Endothelial cell of umbilical vein (primary cell): ENCODE measurements at regions of chr11 and their contacts with region 1.

Region 1: DNA sequence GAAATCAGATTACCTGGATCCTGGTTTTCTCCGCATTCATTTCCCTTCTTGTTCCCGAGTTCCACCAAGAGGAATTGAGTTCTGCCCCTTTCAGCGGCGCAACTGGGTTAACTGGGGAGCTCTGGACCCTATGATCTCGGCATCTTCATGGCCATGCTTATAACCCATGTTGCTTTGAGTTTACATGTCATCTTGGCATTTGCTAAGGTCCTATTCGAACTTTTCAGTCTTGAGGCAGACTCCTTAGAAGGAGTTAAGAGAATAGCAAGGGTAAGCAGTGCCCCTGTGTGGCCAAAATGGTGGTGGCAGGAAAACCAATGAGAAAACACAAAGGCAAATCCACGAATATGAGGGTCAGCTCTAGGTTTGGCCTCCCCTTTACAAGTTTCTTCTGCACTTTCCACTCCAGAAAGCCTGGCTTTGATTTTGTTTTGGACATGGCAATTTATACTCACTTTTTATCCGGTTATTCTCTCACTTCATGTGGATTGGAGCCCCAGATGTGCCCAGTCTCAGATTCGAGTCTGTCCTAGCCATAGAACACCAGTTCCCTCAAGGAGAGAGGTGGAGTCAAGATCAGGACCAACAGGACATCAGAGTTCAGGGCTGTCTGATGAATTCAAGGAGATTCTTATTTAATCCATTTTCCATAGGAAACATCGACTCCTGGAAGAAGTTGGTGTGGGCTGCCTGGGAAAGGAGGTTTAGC is 55.3 kb upstream of the FBXO3 start:
- DNase-seq: peak; percentile 76
- H3K4me3 ChIP-seq: peak overlapping the region; percentile 0 to 29 (median 25)
- H3K27ac ChIP-seq: no peak overlapping the region
- H3K4me1 ChIP-seq: peaks cover 4% of the 10 kb centered on the region
- H3K27me3 ChIP-seq: peaks cover 17 to 19% of the 10 kb centered on the region in 2 experiments
- CTCF ChIP-seq: peak; percentile 74 to 81
- POLR2A ChIP-seq: no peak

Region 2: GRCh38 chr11:33161120-33162005 is 668.2 kb before region 1 on chr11 and contains the start of gene CSTF3:
- CTCF ChIA-PET with region 1: interaction called, 4 read pairs
- POLR2A ChIA-PET with region 1: no interaction called
- dilution Hi-C with region 1: no loop called
- intact Hi-C with region 1: loop called (anchors 2 kb)
- DNase-seq: peak; percentile 99
- H3K4me3 ChIP-seq: peak within 1 kb of the TSS; percentile 62 to 100 (median 100)
- H3K27ac ChIP-seq: peak within 1 kb of the TSS; percentile 92
- H3K4me1 ChIP-seq: peaks cover 23% of the 10 kb centered on the region
- H3K27me3 ChIP-seq: no peaks in the 10 kb centered on the region
- CTCF ChIP-seq: peak; percentile 18 to 38
- POLR2A ChIP-seq: peak; percentile 95
- total RNA-seq, gene CSTF3: 46.6 and 52.3 TPM in 2 replicates

Region 3: GRCh38 chr11:33362051-33362910 is 467.3 kb before region 1 on chr11:
- CTCF ChIA-PET with region 1: no interaction called
- POLR2A ChIA-PET with region 1: no interaction called
- dilution Hi-C with region 1: no loop called
- intact Hi-C with region 1: loop called (anchors 2 kb)
- DNase-seq: peak; percentile 65
- H3K4me3 ChIP-seq: no peak overlapping the region
- H3K27ac ChIP-seq: no peak overlapping the region
- H3K4me1 ChIP-seq: no peaks in the 10 kb centered on the region
- H3K27me3 ChIP-seq: no peaks in the 10 kb centered on the region
- CTCF ChIP-seq: peak; percentile 28 to 35
- POLR2A ChIP-seq: no peak

Region 4: DNA sequence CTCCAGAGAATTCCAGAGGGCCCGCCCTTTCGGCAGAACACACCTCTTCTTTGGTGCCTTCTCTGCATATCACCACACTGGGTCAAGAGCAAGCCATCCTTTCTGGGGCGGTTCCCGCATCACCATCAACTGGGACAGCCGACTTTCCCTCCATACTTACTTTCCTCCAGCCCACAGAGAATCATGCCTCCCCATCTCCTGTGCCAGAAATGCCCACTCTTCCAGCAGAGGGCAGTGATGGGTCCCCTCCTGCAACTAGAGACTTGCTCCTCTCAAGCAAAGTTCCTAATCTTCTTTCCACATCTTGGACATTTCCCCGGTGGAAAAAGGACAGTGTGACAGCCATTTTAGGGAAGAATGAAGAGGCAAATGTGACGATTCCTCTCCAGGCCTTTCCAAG is 286.7 kb before region 1 on chr11:
- CTCF ChIA-PET with region 1: interaction called, 3 read pairs
- POLR2A ChIA-PET with region 1: no interaction called
- dilution Hi-C with region 1: no loop called
- intact Hi-C with region 1: loop called (anchors 1 kb)
- DNase-seq: peak; percentile 72
- H3K4me3 ChIP-seq: no peak overlapping the region
- H3K27ac ChIP-seq: no peak overlapping the region
- H3K4me1 ChIP-seq: no peaks in the 10 kb centered on the region
- H3K27me3 ChIP-seq: no peaks in the 10 kb centered on the region
- CTCF ChIP-seq: peak; percentile 74 to 79
- POLR2A ChIP-seq: no peak

Region 5: DNA sequence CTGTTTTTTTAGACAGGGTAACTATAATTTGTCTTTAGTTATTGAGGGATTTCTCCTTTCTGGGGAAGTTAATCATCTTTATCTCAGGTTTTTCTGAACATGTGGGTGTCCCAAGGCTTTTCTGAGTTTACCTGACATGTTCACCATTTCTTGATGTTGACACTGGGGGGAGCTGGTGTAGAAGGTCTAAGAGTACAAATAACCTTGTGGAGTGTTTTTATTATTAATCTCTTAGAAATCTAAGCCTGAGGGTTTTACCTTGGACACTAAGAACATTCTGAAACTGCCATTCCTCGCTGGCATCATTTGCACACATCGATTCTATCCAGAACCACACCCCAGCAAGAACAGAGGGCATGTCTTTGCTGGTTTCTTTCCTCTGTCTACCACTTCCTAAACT is 113.4 kb before region 1 on chr11:
- CTCF ChIA-PET with region 1: interaction called, 3 read pairs
- POLR2A ChIA-PET with region 1: no interaction called
- dilution Hi-C with region 1: no loop called
- intact Hi-C with region 1: loop called (anchors 1 kb)
- DNase-seq: peak; percentile 66
- H3K4me3 ChIP-seq: no peak overlapping the region
- H3K27ac ChIP-seq: peak overlapping the region; percentile 0
- H3K4me1 ChIP-seq: peaks cover 29% of the 10 kb centered on the region
- H3K27me3 ChIP-seq: no peaks in the 10 kb centered on the region
- CTCF ChIP-seq: peak; percentile 27 to 41
- POLR2A ChIP-seq: no peak

Region 6: GRCh38 chr11:33819278-33819677 is 10.3 kb before region 1 on chr11:
- CTCF ChIA-PET with region 1: interaction called, 11 read pairs
- POLR2A ChIA-PET with region 1: no interaction called
- dilution Hi-C with region 1: no loop called
- intact Hi-C with region 1: no loop called
- DNase-seq: no peak
- H3K4me3 ChIP-seq: no peak overlapping the region
- H3K27ac ChIP-seq: no peak overlapping the region
- H3K4me1 ChIP-seq: no peaks in the 10 kb centered on the region
- H3K27me3 ChIP-seq: peaks cover 22 to 24% of the 10 kb centered on the region in 2 experiments
- CTCF ChIP-seq: no peak
- POLR2A ChIP-seq: no peak